ENCODE measurements at regions of chr22 and their contacts with region 1.

Region 1: DNA sequence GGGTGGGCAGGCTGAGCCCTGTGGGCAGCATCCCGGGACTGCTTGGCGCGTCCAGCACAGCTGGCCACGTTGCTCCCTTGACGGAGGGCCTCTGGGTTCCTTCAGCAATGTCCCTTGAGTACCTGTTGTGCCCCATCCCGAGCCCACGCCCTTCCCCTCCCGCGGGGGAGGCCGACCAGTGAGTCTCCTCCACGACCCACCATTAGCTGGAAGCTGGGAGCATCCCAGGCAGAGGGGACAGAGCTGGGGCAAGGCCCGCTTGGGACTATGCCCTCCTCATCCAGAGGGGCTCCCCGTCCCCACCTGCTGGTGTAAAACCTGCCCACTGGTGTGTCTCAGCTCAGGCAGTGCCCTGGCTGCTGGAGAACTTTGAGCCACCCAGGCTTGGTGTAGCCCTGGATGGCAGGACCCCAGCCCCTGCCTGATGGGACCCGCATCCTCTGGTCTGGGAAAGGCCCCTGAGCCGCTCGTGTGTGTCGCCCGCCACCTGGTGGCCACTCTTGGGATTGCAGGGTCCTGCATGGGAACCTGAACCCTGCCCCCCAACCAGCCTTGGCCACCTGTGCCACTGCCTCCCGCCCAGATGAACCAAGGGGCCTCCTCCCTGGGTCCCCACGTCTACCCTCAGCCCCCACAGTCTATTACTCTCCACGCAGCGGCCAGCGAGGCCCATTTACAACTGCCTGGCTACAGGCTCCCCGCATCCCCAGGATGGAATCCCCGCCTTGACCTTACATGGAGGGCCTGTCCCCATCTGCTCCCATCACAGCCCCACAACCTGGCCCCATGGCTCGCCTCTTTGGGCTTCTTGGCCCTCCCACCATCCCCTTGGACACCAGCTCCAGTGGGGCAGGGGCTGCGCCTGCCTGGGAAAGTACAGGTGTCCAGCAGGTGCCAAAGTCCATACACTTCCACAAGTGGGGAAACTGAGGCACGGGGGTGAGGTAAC is 16.6 kb upstream of the ARHGAP8 start:
- DNase-seq: peak; percentile 52 to 56
- ATAC-seq: peak; percentile 55 to 75
- H3K4me3 ChIP-seq: no peak overlapping the region
- H3K27ac ChIP-seq: no peak overlapping the region
- H3K4me1 ChIP-seq: peaks cover 20% of the 10 kb centered on the region
- CTCF ChIP-seq: peak; percentile 62
- EP300 ChIP-seq: no peak
- POLR2A ChIP-seq: no peak
- RAD21 ChIP-seq: peak; percentile 70 to 73

Region 2: GRCh38 chr22:44684506-44685383 is 51.1 kb before region 1 on chr22:
- CTCF ChIA-PET with region 1: interaction called, 10 read pairs
- POLR2A ChIA-PET with region 1: no interaction called
- DNase-seq: peak; percentile 78 to 90
- ATAC-seq: peak; percentile 93 to 96
- H3K4me3 ChIP-seq: peak overlapping the region; percentile 22; the same call in 1 of the 3 replicates
- H3K27ac ChIP-seq: peak overlapping the region; percentile 65 to 69
- H3K4me1 ChIP-seq: peaks cover 39% of the 10 kb centered on the region
- CTCF ChIP-seq: peak; percentile 67
- EP300 ChIP-seq: no peak
- POLR2A ChIP-seq: no peak
- RAD21 ChIP-seq: peak; percentile 52 to 53; a peak in 4 of 5 replicates

Region 3: DNA sequence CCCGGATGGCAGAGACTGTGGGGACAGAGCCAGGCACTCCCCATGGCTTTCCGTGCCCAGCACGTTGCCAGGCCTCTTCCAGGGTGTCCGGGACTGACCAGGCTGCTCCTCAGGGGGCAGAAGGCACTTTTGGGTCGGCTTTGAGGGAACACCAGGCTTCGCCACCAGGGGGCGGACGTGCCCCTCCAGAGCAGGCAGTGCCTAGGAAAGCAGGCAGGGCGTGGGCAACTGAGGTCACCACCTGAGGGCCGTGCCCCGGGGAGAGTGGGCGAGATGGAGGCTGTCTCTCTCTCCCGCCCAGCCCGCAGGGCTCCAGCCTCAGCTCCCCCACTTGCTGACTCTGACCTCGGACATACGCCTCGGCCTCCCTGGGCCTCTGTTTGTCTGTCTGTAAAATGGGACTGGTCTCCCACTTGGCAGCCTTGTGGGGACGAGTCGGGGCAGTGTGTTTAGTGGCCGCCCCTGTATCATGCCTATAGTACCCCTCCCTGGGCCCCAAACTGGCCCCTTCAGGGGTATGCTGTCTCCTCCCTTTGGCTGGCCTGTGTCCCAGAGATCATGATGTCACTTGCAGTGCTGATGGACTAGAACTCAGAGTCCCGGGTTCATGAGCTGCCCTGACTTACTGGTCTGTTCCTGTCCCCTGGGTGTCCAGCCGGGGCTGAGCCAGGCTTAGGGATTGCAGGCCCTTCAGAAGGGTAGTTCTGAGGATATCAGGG is 38.2 kb before region 1 on chr22:
- CTCF ChIA-PET with region 1: interaction called, 55 read pairs
- POLR2A ChIA-PET with region 1: no interaction called
- DNase-seq: peak; percentile 64 to 67
- ATAC-seq: peak; percentile 73 to 86
- H3K4me3 ChIP-seq: no peak overlapping the region
- H3K27ac ChIP-seq: no peak overlapping the region
- H3K4me1 ChIP-seq: peaks cover 8% of the 10 kb centered on the region; the same call in 1 of the 3 replicates
- CTCF ChIP-seq: peak; percentile 67
- EP300 ChIP-seq: no peak
- POLR2A ChIP-seq: no peak
- RAD21 ChIP-seq: peak; percentile 65 to 75

Region 4: DNA sequence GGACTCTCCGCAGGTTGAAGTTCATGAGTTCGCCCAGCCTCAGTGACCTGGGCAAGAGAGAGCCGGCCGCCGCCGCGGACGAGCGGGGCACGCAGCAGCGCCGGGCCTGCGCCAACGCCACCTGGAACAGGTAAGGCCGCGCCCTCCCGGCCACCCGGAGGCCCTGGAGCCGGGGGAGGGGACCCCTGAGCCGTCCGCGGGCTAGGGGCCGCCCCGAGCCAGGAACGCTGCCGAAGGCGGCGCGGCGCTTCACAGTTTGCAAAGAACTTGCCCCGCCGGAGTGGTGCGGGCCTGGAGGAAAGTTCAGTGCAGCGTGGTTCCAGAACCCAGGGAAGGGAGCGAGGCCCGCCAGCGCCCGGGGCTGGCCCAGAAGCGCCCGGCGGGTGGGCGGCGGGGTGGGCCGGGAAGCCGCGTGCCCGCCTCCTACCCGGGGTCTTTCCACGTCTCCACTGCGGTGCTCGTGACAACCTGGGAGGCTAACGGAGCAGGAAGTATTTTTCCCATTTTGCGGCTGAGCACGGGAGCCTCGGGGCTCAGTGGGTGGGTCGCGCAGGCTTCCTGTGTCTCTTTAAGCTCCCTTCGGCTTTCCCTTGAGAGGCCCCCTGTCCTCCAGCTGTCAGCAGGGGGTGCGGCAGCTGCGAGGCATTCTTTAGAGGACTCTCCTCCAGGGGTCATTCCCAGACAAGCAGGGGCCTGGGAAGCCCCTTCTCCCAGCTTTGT is 33.2 kb before region 1 on chr22:
- CTCF ChIA-PET with region 1: interaction called, 55 read pairs
- POLR2A ChIA-PET with region 1: no interaction called
- DNase-seq: no peak
- ATAC-seq: peak; percentile 25 to 44; a peak in 4 of 6 replicates
- H3K4me3 ChIP-seq: peak overlapping the region; percentile 84
- H3K27ac ChIP-seq: peak overlapping the region; percentile 81 to 97
- H3K4me1 ChIP-seq: peaks cover 16% of the 10 kb centered on the region
- CTCF ChIP-seq: no peak
- EP300 ChIP-seq: no peak
- POLR2A ChIP-seq: no peak
- RAD21 ChIP-seq: no peak

Region 5: DNA sequence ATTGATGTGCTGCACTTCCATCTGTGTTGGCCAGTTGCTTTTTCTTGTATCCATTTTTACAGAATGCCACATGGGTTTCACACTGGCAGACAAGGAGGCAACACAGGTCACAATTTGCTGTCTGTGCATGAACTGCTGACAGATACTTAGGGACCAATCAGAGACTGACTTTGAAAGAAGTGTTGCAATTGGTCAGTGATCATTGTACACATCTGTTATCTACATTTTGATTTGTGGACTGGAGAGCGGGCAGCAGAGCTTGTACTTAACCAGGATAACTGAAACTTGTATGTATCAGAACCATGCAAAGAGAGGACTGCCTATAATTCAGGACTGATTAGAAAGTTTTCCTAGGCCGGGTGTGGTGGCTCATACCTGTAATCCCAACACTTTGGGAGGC is 12.0 kb before region 1 on chr22:
- CTCF ChIA-PET with region 1: interaction called, 23 read pairs
- POLR2A ChIA-PET with region 1: no interaction called
- DNase-seq: peak; percentile 39 to 54
- ATAC-seq: peak in 1 of 2 experiments; percentile 59; a peak in 2 of 6 replicates
- H3K4me3 ChIP-seq: no peak overlapping the region
- H3K27ac ChIP-seq: no peak overlapping the region
- H3K4me1 ChIP-seq: no peaks in the 10 kb centered on the region
- CTCF ChIP-seq: no peak
- EP300 ChIP-seq: no peak
- POLR2A ChIP-seq: no peak
- RAD21 ChIP-seq: no peak

Measured in A549 (cell line).